Left cardiac atrium (tissue), 4 donors: ENCODE measurements at regions of chr17 and their contacts with region 1.

Region 1: DNA sequence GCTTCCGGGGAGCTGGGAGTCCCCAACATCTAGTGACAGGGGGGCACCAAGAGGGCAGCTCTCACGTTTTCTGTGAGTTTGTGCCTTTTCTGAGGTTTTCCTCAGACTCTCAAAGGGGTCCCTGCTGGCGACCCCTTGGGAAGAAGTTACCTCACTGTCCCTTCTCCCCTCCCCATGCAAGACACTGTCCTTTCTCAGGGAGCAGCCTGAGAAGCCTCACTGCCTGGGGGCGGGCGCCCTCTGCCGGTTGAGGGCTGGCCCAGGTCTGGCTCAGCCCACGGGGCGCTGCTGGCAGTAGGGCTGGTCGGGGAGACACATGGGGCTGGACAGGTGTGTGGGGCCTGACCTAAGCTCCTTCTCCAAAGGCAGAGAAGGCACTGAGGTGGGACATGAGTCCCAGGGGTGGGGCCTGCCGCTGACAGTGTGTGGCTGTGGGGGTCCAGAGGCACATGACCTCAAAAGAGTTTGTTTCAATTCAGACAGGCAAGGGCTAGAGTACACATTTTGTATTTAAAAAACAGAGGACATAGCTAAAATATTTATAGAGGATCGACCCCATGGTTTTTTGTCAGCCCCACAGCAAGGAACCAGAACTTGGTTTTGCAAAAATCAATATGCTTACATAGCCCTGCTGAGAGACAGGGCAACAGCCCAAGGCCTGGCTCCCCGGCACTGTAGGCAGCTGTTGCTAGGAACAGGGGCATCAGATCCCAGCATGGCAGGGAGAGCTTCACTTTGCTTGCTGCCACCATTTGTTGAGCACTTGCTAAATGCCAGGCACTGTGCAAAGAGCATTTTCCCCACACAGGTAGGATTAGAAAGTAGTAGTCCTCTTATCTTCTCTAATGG is 18.5 kb upstream of the ALDH3A1 start:
- DNase-seq: peak; percentile 86
- ATAC-seq: peak; percentile 90 to 94

Region 2: DNA sequence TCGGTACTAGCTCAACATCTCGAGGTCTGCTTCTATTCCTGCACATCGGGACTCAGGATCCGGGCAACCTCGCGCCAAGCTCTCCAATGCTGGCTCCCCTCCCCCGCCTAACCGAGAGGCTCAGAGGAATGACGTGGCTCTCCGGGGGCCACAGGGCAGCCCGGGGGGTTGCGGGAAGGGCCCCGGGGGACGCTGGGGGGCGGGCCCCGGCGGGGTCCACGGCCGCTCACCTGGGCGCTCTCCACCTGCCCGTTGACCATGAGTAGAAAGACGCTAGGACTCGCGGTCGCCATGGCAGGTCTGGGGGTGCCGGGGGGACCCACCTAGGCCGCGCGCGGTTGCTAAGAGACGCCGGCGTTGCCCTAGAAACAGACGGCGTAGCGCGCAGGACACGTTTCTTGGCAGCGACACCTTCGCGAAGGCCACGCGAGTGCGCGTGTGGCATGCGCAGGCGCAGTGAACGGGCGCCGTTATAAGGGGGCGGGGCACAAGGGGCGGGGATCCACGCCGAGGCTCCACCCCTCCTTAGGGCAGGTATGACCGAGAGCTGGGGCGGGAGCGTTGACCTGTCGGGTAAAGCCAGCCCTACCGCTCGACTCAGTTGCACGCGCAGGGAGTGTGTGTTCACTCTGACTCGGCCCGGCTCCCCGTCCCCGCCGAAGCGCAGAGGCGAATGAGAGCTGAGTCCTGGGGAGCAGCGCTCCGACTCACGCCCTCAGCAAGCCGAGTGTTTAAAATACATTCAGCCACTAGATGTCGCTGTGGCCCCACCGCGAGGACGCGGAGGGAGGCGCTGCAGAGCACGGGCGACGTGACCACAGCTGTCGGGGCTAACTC is 404.2 kb before region 1 on chr17 and contains the start of gene B9D1:
- intact Hi-C with region 1: loop called (anchors 5 to 10 kb)
- DNase-seq: peak; percentile 93
- ATAC-seq: peak; percentile 95 to 97
- total RNA-seq, gene B9D1: 7.3 to 8.4 TPM

Region 3: GRCh38 chr17:19513897-19514488 is 252.7 kb before region 1 on chr17:
- intact Hi-C with region 1: loop called (anchors 1 to 5 kb)
- DNase-seq: peak; percentile 72
- ATAC-seq: peak; percentile 82 to 86

Region 4: GRCh38 chr17:19648475-19649406 is 117.9 kb before region 1 on chr17 and contains the start of gene ALDH3A2:
- intact Hi-C with region 1: loop called in 1 of 2 experiments (anchors 10 kb)
- DNase-seq: peak; percentile 99
- ATAC-seq: peak; percentile 99
- total RNA-seq, gene ALDH3A2: 38.3 to 58.0 TPM

Region 5: GRCh38 chr17:19940722-19941464 is 174.2 kb after region 1 on chr17:
- intact Hi-C with region 1: no loop called
- DNase-seq: no peak
- ATAC-seq: no peak